CD4-positive, alpha-beta memory T cell (primary cell): ENCODE measurements at regions of chr18 and their contacts with region 1.

Region 1: DNA sequence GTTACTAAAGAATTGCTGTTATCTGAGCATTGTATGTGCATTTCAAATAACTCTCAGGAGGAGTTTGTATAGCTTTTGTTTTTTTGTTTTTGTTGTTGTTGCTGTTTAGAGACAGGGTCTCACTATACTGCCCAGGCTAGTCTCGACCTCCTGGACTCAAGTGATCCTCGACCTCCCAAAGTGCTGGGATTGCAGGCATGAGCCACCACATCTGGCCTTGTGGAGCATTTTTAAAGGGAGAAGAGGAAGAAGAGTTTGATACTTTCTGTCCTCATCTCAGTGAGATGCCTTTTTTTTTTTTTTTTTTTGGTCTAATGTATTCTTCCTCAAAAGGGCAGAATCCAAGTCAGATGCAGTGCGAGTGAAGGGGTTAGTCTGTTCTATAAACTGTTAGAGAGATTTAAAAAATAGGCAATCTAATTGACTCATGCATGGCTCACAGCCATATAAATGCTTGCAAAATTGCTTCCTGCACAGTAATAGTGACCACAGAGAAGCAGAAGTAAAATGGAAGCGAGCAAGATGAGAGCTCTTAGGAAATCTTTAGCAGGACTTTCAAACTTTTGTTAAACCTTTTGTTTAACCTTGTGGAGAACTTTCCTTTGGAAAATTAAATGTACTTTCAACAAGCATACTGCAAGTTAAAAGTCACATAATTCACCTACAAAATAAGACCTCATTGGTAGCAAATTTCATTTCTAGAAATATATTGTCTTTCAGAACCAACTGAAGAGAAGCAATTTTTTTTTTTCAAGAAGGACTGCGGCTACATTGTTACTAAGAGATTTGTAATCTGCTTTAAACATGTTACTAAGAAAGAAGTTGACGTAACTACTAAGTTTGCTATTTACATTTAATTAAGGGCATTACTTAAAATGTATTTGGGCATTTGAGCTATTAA is 52.3 kb upstream of the ROCK1 start:
- DNase-seq: no peak
- H3K4me3 ChIP-seq: no peak overlapping the region
- H3K4me3 Mint-ChIP-seq: no peak overlapping the region
- H3K27ac ChIP-seq: no peak overlapping the region
- H3K27ac Mint-ChIP-seq: no peak overlapping the region
- H3K4me1 ChIP-seq: no peaks in the 10 kb centered on the region
- H3K4me1 Mint-ChIP-seq: no peaks in the 10 kb centered on the region
- H3K27me3 ChIP-seq: no peaks in the 10 kb centered on the region
- H3K27me3 Mint-ChIP-seq: peaks cover 1 to 12% of the 10 kb centered on the region in 2 donors

Region 2: DNA sequence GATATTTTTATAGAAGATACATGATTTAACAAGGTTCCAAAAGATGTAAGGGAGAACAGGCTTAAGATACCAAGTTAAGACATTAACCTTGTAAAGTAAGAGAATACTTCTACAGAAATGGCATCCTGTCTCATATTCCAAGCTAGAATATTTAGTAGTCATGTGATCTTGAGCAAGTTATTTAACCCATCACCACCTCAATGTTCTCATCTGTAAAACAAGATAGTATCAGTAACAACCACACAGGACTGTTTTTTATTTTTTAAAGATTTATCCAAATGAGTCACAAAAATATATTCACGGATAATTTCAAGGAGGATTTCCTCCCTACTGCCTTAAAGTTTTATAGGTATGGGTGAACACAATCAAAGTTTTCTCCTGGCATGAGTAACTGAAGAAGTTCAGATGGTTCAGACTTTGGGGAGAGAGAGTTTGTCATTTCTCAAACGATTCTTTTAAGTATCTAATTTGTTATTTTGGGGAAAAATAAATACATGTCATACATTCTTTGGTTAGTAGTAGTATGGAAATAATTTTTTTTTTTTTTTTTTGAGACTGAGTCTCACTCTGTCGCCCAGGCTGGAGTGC is 78.2 kb before region 1 on chr18:
- CTCF ChIA-PET with region 1: no interaction called
- POLR2A ChIA-PET with region 1: no interaction called
- intact Hi-C with region 1: no loop called
- DNase-seq: no peak
- H3K4me3 ChIP-seq: no peak overlapping the region
- H3K4me3 Mint-ChIP-seq: peak overlapping the region in 6 of 8 donors; percentile 18 to 81 (median 54)
- H3K27ac ChIP-seq: no peak overlapping the region
- H3K27ac Mint-ChIP-seq: peak overlapping the region in 1 of 7 donors; percentile 49
- H3K4me1 ChIP-seq: peaks cover 78% of the 10 kb centered on the region
- H3K4me1 Mint-ChIP-seq: peaks cover 62 to 92% (median 76%) of the 10 kb centered on the region in 4 donors
- H3K27me3 ChIP-seq: no peaks in the 10 kb centered on the region
- H3K27me3 Mint-ChIP-seq: no peaks in the 10 kb centered on the region

Region 3: GRCh38 chr18:21146016-21146415 is 17.9 kb before region 1 on chr18:
- CTCF ChIA-PET with region 1: no interaction called
- POLR2A ChIA-PET with region 1: no interaction called
- intact Hi-C with region 1: no loop called
- DNase-seq: no peak
- H3K4me3 ChIP-seq: no peak overlapping the region
- H3K4me3 Mint-ChIP-seq: no peak overlapping the region
- H3K27ac ChIP-seq: no peak overlapping the region
- H3K27ac Mint-ChIP-seq: no peak overlapping the region
- H3K4me1 ChIP-seq: no peaks in the 10 kb centered on the region
- H3K4me1 Mint-ChIP-seq: no peaks in the 10 kb centered on the region
- H3K27me3 ChIP-seq: no peaks in the 10 kb centered on the region
- H3K27me3 Mint-ChIP-seq: peaks cover 0 to 1% of the 10 kb centered on the region in 2 donors

Region 4: DNA sequence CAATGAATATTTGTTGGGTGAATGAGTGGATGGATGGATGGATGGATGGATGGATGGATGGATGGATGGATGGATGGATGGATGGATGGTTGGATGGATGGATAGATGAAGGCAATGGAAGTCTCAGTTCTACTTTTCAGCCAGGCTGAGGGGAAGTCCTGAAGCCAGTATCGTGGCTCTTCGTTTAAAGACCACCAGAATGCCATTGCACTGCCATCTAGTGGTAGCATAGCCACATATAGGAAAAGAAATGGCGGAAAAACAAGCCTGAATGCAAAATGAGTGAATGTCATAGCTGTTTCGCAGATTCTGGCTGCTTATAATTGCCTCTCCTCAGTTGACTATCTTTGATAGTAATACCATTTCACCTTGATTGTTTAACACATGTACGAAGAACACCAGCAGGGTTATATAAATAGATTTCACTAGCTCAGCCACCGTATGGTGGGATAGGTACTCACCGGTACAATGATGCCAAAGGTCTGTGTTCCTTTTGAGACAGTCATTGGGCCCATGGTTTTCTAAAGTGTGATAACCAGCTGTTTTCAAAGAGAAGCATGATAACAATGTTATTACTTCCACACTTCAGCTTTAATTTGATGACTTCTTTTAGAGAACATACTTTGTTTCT is 15.8 kb after region 1 on chr18:
- CTCF ChIA-PET with region 1: interaction called, 28 read pairs
- POLR2A ChIA-PET with region 1: no interaction called
- intact Hi-C with region 1: no loop called
- DNase-seq: peak in 4 of 5 donors; percentile 22 to 37 (median 28)
- H3K4me3 ChIP-seq: no peak overlapping the region
- H3K4me3 Mint-ChIP-seq: no peak overlapping the region
- H3K27ac ChIP-seq: no peak overlapping the region
- H3K27ac Mint-ChIP-seq: no peak overlapping the region
- H3K4me1 ChIP-seq: no peaks in the 10 kb centered on the region
- H3K4me1 Mint-ChIP-seq: peaks cover 0 to 19% (median 5%) of the 10 kb centered on the region in 4 donors
- H3K27me3 ChIP-seq: no peaks in the 10 kb centered on the region
- H3K27me3 Mint-ChIP-seq: no peaks in the 10 kb centered on the region